ENCODE measurements at regions of chr11 and their contacts with region 1.

Region 1: GRCh38 chr11:67353317-67354074 is at the start of gene POLD4:
- DNase-seq: peak; percentile 98
- ATAC-seq: peak; percentile 91
- H3K4me3 Mint-ChIP-seq: peak within 1 kb of the TSS; percentile 95
- H3K27ac Mint-ChIP-seq: peak within 1 kb of the TSS; percentile 99
- H3K4me1 Mint-ChIP-seq: peaks cover 49% of the 10 kb centered on the region
- H3K27me3 Mint-ChIP-seq: no peaks in the 10 kb centered on the region
- total RNA-seq, gene POLD4: 31.3 to 37.5 TPM

Region 2: GRCh38 chr11:67239783-67240575 is 113.5 kb before region 1 on chr11:
- CTCF ChIA-PET with region 1: interaction called, 5 read pairs
- POLR2A ChIA-PET with region 1: interaction called, 3 read pairs
- intact Hi-C with region 1: loop called in 1 of 2 experiments (anchors 1 kb)
- DNase-seq: peak; percentile 98
- ATAC-seq: peak; percentile 94
- H3K4me3 Mint-ChIP-seq: peak overlapping the region; percentile 98
- H3K27ac Mint-ChIP-seq: peak overlapping the region; percentile 99
- H3K4me1 Mint-ChIP-seq: peaks cover 43% of the 10 kb centered on the region
- H3K27me3 Mint-ChIP-seq: no peaks in the 10 kb centered on the region

Region 3: GRCh38 chr11:67366961-67367760 is 13.7 kb after region 1 on chr11:
- CTCF ChIA-PET with region 1: interaction called, 59 read pairs
- POLR2A ChIA-PET with region 1: no interaction called
- intact Hi-C with region 1: no loop called
- DNase-seq: no peak
- ATAC-seq: no peak
- H3K4me3 Mint-ChIP-seq: no peak overlapping the region
- H3K27ac Mint-ChIP-seq: no peak overlapping the region
- H3K4me1 Mint-ChIP-seq: peaks cover 47% of the 10 kb centered on the region
- H3K27me3 Mint-ChIP-seq: peaks cover 20% of the 10 kb centered on the region

Region 4: DNA sequence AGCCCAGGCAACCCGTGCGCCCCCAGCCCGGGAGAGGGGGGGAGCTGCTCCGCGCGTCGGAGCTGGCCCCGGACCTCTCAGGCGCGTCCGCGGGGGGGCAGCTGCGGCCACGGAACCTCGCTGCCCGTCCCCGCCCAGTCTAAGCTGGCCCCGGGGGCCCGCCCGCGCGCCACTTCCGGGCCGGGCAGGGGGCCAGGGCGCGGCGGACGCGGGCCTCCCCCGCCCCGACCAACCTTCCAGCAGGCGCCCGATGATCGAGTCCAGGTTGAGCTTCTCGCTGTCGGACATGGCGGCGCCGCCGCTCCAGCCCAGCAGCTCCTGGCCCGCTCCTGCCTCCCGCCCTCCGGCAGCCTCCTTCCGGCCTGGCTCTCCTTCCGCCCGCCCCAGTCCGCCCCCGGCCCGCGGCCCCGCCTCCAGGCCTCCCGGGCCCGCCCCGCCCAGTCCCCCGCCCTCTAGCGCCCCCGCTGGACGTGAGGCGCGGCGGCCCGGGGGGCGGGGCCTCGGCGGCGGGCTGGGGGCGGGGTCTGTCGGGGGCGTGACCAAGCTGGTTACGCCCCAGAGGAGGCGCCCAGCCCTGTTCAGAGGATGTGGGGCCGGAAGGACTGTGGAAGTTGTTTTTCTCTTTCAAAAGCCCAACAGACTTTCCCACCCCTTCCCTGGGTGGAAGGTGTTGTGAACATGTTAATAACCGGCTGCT is 48.1 kb after region 1 on chr11 and contains the start of gene PPP1CA:
- CTCF ChIA-PET with region 1: interaction called, 9 read pairs
- POLR2A ChIA-PET with region 1: no interaction called
- intact Hi-C with region 1: loop called in 1 of 2 experiments (anchors 1 kb)
- DNase-seq: peak; percentile 97
- ATAC-seq: peak; percentile 67
- H3K4me3 Mint-ChIP-seq: peak within 1 kb of the TSS; percentile 82
- H3K27ac Mint-ChIP-seq: peak within 1 kb of the TSS; percentile 87
- H3K4me1 Mint-ChIP-seq: peaks cover 52% of the 10 kb centered on the region
- H3K27me3 Mint-ChIP-seq: no peaks in the 10 kb centered on the region
- total RNA-seq, gene PPP1CA: 199 to 227 TPM

Region 5: DNA sequence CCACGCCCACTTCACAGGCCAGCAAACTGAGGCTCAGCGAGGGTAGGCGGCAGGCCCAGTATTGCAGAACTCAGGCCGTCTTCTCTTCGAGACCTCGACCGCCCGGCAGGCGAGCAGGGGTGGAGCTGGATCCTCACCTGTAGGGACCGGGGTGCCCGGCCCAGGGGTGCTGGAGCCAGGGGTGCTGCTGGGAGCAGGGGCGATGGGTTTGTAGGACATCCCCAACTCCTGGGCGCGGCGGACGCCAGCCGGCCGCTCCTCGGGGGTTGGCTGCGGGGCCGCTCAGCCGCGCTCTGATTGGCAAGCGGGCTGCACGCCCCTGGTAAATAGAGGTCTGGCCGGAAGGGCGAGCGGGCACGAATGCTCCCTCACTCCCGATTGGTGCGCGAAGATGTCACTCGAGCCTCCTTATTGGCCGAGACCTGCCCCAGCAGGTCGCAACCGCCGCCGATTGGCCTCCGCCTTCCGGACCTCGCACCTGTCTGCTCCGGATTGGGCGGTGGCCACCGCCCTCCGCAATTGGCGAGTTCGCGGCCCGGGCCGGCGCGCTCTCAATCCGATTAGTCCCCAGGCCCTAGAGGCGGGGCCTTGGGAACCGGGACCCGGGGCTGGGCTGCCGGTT is 154.5 kb after region 1 on chr11 and contains the start of gene CDK2AP2:
- CTCF ChIA-PET with region 1: interaction called, 5 read pairs
- POLR2A ChIA-PET with region 1: no interaction called
- intact Hi-C with region 1: loop called (anchors 1 kb)
- DNase-seq: peak; percentile 99
- ATAC-seq: peak; percentile 78
- H3K4me3 Mint-ChIP-seq: peak within 1 kb of the TSS; percentile 89
- H3K27ac Mint-ChIP-seq: peak within 1 kb of the TSS; percentile 88
- H3K4me1 Mint-ChIP-seq: peaks cover 31% of the 10 kb centered on the region
- H3K27me3 Mint-ChIP-seq: no peaks in the 10 kb centered on the region
- total RNA-seq, gene CDK2AP2: 64.1 to 68.7 TPM

Region 6: GRCh38 chr11:67572747-67573419 is 219.4 kb after region 1 on chr11:
- CTCF ChIA-PET with region 1: no interaction called
- POLR2A ChIA-PET with region 1: no interaction called
- intact Hi-C with region 1: no loop called
- DNase-seq: peak; percentile 60
- ATAC-seq: peak; percentile 47
- H3K4me3 Mint-ChIP-seq: no peak overlapping the region
- H3K27ac Mint-ChIP-seq: no peak overlapping the region
- H3K4me1 Mint-ChIP-seq: no peaks in the 10 kb centered on the region
- H3K27me3 Mint-ChIP-seq: peaks cover 5% of the 10 kb centered on the region

Region 7: DNA sequence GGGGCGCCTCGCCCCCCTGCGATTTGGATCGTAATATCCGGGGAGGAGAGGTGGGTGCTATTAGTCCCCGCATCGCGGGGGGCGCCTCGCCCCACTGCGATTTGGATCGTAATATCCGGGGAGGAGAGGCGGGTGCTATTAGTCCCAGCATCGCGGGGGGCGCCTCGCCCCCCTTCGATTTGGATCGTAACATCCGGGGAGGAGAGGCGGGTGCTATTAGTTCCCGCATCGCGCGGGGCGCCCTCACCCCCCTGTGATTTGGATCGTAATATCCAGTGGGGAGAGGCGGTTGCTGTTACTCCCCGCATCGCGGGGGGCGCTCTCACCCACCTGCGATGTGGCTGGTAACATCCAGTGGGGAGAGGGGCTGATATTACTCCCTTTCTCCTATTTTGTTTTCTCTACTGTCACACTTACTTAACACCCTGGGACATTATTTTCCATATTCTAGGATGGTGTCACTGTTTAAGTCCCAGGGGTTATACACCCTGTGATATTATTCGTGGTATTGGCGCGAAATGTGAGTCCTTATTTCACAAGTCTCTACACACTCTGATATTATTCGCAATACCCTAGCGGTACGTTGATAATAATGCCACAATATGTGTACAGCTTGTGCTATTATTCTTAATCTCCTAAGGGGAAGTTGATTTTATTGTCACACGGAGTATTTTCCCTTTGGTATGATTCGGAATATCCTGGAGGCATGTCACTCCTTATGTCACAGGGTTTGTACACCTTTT is 378.7 kb after region 1 on chr11:
- CTCF ChIA-PET with region 1: no interaction called
- POLR2A ChIA-PET with region 1: no interaction called
- intact Hi-C with region 1: loop called in 1 of 2 experiments (anchors 10 kb)
- DNase-seq: peak; percentile 72
- ATAC-seq: peak; percentile 90
- H3K4me3 Mint-ChIP-seq: no peak overlapping the region
- H3K27ac Mint-ChIP-seq: no peak overlapping the region
- H3K4me1 Mint-ChIP-seq: peaks cover 14% of the 10 kb centered on the region
- H3K27me3 Mint-ChIP-seq: peaks cover 19% of the 10 kb centered on the region

Measured in activated CD4-positive, alpha-beta T cell treated with anti-CD3 and anti-CD28 coated beads for 36 hours (primary cell).